ENCODE measurements at regions of chr19 and their contacts with region 1.

Region 1: GRCh38 chr19:13262450-13262849 is 112.2 kb downstream of the IER2 start:
- DNase-seq: peak; percentile 88
- ATAC-seq: peak; percentile 59
- H3K4me3 ChIP-seq: no peak overlapping the region
- H3K27ac ChIP-seq: no peak overlapping the region
- H3K4me1 ChIP-seq: peaks cover 20% of the 10 kb centered on the region
- H3K27me3 ChIP-seq: no peaks in the 10 kb centered on the region
- CTCF ChIP-seq: peak; percentile 82

Region 2: DNA sequence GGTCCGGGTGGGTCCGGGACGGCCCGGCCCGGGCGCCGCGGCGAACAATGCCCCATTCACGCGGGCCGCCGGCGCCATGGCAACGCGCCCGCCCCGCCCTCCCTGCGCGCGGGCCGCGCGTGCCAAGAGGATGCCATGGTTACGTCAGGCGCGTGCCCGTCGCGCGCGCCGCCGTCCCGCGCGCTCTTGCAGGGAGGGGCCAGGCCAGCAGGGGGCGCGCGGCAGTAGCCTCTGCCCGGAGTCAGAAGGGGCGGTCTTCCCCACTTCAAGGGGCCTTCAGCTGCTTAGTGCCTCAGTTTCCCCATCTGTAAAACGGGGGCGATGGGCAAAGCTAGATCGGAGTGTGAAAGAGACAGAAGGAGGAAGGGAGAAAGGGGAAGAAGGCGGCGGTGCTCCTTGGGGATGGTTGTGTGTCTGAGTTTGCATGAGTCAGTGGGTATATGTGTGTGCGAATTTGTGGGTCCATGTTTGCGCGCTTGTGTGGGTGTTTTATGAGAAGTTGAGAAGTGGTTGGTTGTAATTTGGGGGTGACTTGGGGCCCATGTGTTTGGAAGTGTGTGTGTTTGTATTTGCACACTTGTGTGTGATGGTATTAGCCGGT is 278.8 kb before region 1 on chr19:
- CTCF ChIA-PET with region 1: interaction called, 3 read pairs
- POLR2A ChIA-PET with region 1: no interaction called
- intact Hi-C with region 1: loop called (anchors 1 kb)
- DNase-seq: peak; percentile 89
- ATAC-seq: peak; percentile 84
- H3K4me3 ChIP-seq: peak overlapping the region; percentile 61
- H3K27ac ChIP-seq: no peak overlapping the region
- H3K4me1 ChIP-seq: no peaks in the 10 kb centered on the region
- H3K27me3 ChIP-seq: no peaks in the 10 kb centered on the region
- CTCF ChIP-seq: peak; percentile 94

Region 3: GRCh38 chr19:13162518-13163314 is 99.7 kb before region 1 on chr19:
- CTCF ChIA-PET with region 1: no interaction called
- POLR2A ChIA-PET with region 1: interaction called, 4 read pairs
- intact Hi-C with region 1: loop called (anchors 2 kb)
- DNase-seq: peak; percentile 100
- ATAC-seq: peak; percentile 50
- H3K4me3 ChIP-seq: peak overlapping the region; percentile 67
- H3K27ac ChIP-seq: peak overlapping the region; percentile 97
- H3K4me1 ChIP-seq: peaks cover 63% of the 10 kb centered on the region
- H3K27me3 ChIP-seq: no peaks in the 10 kb centered on the region
- CTCF ChIP-seq: no peak

Region 4: DNA sequence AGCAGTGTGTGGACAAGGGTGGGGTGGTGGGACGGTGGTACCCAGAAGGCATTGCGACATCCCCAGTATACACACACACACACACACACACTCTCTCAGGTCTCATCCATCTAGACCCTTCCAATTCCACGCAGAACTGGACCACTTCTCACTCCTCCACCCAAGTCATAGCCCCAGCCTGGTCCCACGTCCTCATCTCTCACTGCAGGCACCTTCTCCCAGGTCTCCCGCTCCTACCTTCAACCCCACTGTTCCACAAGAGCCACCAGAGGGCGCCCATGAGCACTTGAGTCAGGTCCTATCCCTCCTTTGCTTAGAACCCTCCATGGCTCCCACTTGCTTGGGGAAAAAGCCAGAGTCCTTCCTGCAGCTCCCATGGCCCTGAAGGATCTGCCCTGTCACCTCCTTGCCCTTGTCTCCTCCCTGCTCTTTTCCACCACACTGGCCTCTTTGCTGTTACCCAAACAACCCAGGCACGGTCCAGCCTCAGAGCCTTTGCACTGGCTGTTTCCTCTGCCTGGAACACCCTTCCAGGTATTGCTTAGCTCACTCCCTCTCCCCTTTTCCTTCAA is 49.6 kb before region 1 on chr19:
- CTCF ChIA-PET with region 1: no interaction called
- POLR2A ChIA-PET with region 1: no interaction called
- intact Hi-C with region 1: loop called (anchors 5 kb)
- DNase-seq: peak; percentile 76
- ATAC-seq: peak; percentile 62
- H3K4me3 ChIP-seq: no peak overlapping the region
- H3K27ac ChIP-seq: no peak overlapping the region
- H3K4me1 ChIP-seq: no peaks in the 10 kb centered on the region; the same call in 1 of the 2 replicates
- H3K27me3 ChIP-seq: no peaks in the 10 kb centered on the region
- CTCF ChIP-seq: peak; percentile 89

Measured in PC-3 (cell line).